Calu3 (cell line): ENCODE measurements at regions of chr12 and their contacts with region 1.

Region 1: DNA sequence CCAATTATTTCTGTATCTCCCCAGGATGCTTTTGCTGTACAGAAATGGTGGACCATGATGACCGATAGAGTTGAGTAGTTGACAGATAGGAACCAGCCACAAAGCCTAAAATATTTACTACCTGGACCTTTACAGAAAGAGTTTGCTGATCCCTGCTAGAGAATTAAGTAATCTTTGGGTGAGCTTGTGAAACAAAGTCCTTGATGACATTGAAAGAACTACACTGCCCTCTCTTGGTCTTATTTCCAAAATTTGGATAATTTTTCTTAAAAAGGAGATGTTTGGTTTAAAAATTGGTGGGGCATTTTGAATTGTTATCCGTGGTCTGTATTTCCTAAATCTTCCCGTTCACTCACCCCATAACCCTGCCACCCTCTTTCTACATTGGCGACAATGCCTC is 13.7 kb upstream of the TCTN1 start:
- DNase-seq: no peak
- H3K4me3 Mint-ChIP-seq: no peak overlapping the region
- H3K27ac Mint-ChIP-seq: peak overlapping the region; percentile 27
- H3K4me1 Mint-ChIP-seq: peaks cover 8% of the 10 kb centered on the region
- H3K27me3 Mint-ChIP-seq: no peaks in the 10 kb centered on the region
- CTCF ChIP-seq: peak; percentile 61

Region 2: GRCh38 chr12:110100315-110100970 is 499.8 kb before region 1 on chr12:
- CTCF ChIA-PET with region 1: interaction called, 5 read pairs
- intact Hi-C with region 1: loop called (anchors 5 kb)
- DNase-seq: peak; percentile 72
- H3K4me3 Mint-ChIP-seq: no peak overlapping the region
- H3K27ac Mint-ChIP-seq: no peak overlapping the region
- H3K4me1 Mint-ChIP-seq: no peaks in the 10 kb centered on the region
- H3K27me3 Mint-ChIP-seq: peaks cover 3% of the 10 kb centered on the region
- CTCF ChIP-seq: peak; percentile 91

Region 3: DNA sequence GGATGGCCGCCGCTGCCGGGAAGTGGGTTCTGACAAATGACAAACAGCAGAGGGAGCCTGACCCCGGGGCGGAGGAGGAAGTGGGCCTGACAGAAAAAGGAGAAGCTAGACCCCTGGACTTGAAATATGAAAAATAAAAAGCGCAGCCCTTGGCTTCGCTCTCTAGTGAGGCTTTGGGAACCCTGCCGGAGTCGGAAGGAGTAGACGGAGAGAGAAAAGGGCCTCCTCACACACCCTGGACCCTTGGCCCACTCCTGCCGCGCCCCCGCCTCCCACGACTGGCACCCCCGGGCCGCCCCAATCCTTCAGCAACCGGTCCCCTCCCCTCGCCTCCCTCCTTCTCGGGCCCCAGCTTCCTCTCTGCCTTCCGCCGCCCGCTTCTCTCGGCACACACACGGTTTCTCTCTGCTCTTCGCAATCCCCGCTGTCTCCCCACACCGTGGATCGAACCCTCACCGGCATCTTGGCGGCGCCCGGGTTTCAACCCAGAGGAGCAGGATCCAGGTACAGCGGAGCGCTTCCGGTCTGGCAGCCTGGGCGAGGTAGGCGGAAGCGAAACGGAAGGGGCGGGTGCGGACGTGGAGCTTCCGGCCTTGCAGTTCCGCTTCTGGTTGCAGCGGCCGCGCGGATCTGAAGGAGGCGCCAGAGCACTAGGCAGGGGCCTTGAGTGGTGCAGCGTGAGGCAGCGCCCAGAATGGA is 150.3 kb before region 1 on chr12 and contains the start of gene ARPC3:
- CTCF ChIA-PET with region 1: interaction called, 16 read pairs
- intact Hi-C with region 1: loop called (anchors 5 kb)
- DNase-seq: peak; percentile 96
- H3K4me3 Mint-ChIP-seq: peak within 1 kb of the TSS; percentile 92
- H3K27ac Mint-ChIP-seq: peak within 1 kb of the TSS; percentile 96
- H3K4me1 Mint-ChIP-seq: peaks cover 8% of the 10 kb centered on the region
- H3K27me3 Mint-ChIP-seq: no peaks in the 10 kb centered on the region
- CTCF ChIP-seq: peak; percentile 79
- total RNA-seq, gene ARPC3: 321 and 344 TPM in 2 replicates

Region 4: GRCh38 chr12:110468212-110469048 is 131.8 kb before region 1 on chr12 and contains the starts of genes FAM216A and GPN3:
- CTCF ChIA-PET with region 1: interaction called, 9 read pairs
- intact Hi-C with region 1: loop called (anchors 1 kb)
- DNase-seq: peak; percentile 98
- H3K4me3 Mint-ChIP-seq: peak within 1 kb of the TSS; percentile 85
- H3K27ac Mint-ChIP-seq: peak within 1 kb of the TSS; percentile 87
- H3K4me1 Mint-ChIP-seq: peaks cover 14% of the 10 kb centered on the region
- H3K27me3 Mint-ChIP-seq: no peaks in the 10 kb centered on the region
- CTCF ChIP-seq: no peak
- total RNA-seq, gene FAM216A: 10.5 and 11.2 TPM in 2 replicates
- total RNA-seq, gene GPN3: 31.8 and 35.9 TPM in 2 replicates

Region 5: GRCh38 chr12:110508071-110508586 is 92.1 kb before region 1 on chr12:
- CTCF ChIA-PET with region 1: interaction called, 11 read pairs
- intact Hi-C with region 1: loop called (anchors 1 kb)
- DNase-seq: no peak
- H3K4me3 Mint-ChIP-seq: no peak overlapping the region
- H3K27ac Mint-ChIP-seq: no peak overlapping the region
- H3K4me1 Mint-ChIP-seq: no peaks in the 10 kb centered on the region
- H3K27me3 Mint-ChIP-seq: no peaks in the 10 kb centered on the region
- CTCF ChIP-seq: no peak

Region 6: DNA sequence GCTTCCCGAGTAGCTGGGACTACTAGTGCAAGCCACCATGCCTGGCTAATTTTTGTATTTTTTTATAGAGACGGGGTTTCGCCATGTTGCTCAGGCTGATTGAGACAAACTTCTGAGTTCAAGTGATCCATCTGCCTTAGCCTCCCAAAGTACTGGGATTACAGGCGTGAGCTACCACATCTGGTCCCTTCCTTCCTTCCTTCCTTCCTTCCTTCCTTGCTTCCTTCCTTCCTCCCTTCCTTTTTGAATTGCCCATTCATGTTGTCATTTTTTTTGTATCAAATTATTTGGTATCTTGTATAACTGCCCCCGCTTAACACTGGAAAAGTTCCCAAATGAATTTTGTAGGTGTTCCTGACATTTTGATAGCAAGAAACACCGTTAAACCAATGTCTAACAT is 86.4 kb before region 1 on chr12:
- CTCF ChIA-PET with region 1: interaction called, 11 read pairs
- intact Hi-C with region 1: loop called (anchors 1 kb)
- DNase-seq: no peak
- H3K4me3 Mint-ChIP-seq: no peak overlapping the region
- H3K27ac Mint-ChIP-seq: no peak overlapping the region
- H3K4me1 Mint-ChIP-seq: no peaks in the 10 kb centered on the region
- H3K27me3 Mint-ChIP-seq: no peaks in the 10 kb centered on the region
- CTCF ChIP-seq: no peak

Region 7: DNA sequence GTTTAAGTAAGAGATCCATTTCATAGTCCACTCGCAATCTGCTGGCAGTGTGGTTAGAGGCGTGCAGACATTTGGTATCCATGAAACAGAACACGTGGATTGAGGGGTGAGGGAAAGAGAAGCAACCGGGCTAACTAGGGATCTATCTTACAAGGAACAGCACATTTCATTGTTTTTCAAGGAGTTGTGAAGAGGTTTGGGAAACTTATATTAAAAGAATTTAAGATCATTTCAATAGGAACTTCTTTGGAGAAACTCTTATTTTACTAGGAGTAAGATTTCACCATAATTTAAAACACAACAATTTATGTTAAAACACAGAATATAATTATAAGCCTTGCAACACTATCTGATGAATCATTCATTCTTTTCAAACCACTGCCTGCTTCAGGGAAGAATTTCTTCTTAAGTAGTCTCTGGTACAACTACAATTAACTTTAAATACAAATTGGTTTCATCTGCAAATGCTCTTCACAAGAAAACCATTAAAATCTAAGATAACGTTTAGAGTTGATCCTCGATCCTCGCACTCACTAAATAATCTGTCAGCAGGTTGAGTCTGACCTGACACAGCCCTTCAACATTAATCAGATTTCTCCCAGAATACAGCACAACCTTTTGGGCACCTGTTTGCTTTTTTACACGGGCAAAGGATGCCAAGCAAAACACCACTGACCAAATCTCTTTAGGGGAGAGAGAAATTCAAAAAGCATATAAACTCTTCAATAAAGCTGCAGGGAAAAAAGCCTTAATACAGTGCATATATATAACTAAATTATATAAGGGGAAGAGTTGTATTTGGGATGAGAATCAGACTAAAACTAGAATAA is 44.5 kb before region 1 on chr12:
- CTCF ChIA-PET with region 1: interaction called, 22 read pairs
- intact Hi-C with region 1: loop called (anchors 1 kb)
- DNase-seq: no peak
- H3K4me3 Mint-ChIP-seq: no peak overlapping the region
- H3K27ac Mint-ChIP-seq: no peak overlapping the region
- H3K4me1 Mint-ChIP-seq: peaks cover 20% of the 10 kb centered on the region
- H3K27me3 Mint-ChIP-seq: no peaks in the 10 kb centered on the region
- CTCF ChIP-seq: no peak